Activated naive CD4-positive, alpha-beta T cell treated with anti-CD3 and anti-CD28 coated beads for 36 hours (primary cell): ENCODE measurements at regions of chr16 and their contacts with region 1.

Region 1: DNA sequence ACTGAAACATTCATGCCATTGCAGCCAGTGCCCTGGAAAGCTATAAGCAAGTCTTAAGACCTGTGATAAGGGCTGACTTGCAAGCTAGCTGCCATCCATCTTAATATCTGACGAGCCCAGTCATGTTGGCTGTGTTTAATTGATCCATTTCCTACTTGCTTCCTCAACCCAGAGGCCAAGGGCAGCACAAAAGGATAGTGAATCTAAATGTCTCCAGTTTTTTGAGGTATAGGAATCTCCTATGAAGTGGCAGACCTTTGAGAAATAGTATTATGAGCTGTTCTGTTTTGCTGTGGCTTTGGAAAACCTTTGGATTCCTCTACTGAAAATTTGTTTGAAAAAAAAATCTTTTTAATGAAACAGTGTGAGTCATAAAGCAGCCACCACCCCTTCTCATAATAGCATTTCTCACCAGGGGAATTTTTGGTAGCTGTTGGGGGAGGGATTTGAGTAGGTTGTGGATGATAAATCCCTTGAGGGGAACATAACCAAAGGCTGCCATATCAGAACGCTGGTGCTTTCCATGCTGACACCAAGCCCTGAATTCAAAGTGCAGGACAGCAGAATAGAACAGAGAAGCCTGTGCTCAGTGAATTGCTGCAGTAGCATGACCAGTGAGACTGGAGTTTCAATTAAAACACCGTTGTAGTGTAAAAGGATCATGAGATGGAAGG is 12.9 kb downstream of the ZNRF1 start:
- DNase-seq: peak; percentile 86
- H3K4me3 Mint-ChIP-seq: peak overlapping the region; percentile 62
- H3K27ac Mint-ChIP-seq: peak overlapping the region; percentile 95
- H3K4me1 Mint-ChIP-seq: peaks cover 48% of the 10 kb centered on the region
- H3K27me3 Mint-ChIP-seq: no peaks in the 10 kb centered on the region

Region 2: GRCh38 chr16:74700438-74701225 is 311.1 kb before region 1 on chr16 and contains the start of gene MLKL:
- CTCF ChIA-PET with region 1: no interaction called
- intact Hi-C with region 1: loop called (anchors 2 kb)
- DNase-seq: peak; percentile 71
- H3K4me3 Mint-ChIP-seq: peak within 1 kb of the TSS; percentile 93
- H3K27ac Mint-ChIP-seq: peak within 1 kb of the TSS; percentile 96
- H3K4me1 Mint-ChIP-seq: peaks cover 61% of the 10 kb centered on the region
- H3K27me3 Mint-ChIP-seq: no peaks in the 10 kb centered on the region
- total RNA-seq, gene MLKL: 10.7 to 12.0 TPM

Region 3: GRCh38 chr16:74998481-74999218 is 13.1 kb before region 1 on chr16 and contains the start of gene ZNRF1:
- CTCF ChIA-PET with region 1: interaction called, 9 read pairs
- intact Hi-C with region 1: loop called (anchors 1 kb)
- DNase-seq: peak; percentile 92
- H3K4me3 Mint-ChIP-seq: peak within 1 kb of the TSS; percentile 79
- H3K27ac Mint-ChIP-seq: peak within 1 kb of the TSS; percentile 83
- H3K4me1 Mint-ChIP-seq: peaks cover 25% of the 10 kb centered on the region
- H3K27me3 Mint-ChIP-seq: peaks cover 12% of the 10 kb centered on the region
- total RNA-seq, gene ZNRF1: 35.3 to 35.7 TPM

Region 4: DNA sequence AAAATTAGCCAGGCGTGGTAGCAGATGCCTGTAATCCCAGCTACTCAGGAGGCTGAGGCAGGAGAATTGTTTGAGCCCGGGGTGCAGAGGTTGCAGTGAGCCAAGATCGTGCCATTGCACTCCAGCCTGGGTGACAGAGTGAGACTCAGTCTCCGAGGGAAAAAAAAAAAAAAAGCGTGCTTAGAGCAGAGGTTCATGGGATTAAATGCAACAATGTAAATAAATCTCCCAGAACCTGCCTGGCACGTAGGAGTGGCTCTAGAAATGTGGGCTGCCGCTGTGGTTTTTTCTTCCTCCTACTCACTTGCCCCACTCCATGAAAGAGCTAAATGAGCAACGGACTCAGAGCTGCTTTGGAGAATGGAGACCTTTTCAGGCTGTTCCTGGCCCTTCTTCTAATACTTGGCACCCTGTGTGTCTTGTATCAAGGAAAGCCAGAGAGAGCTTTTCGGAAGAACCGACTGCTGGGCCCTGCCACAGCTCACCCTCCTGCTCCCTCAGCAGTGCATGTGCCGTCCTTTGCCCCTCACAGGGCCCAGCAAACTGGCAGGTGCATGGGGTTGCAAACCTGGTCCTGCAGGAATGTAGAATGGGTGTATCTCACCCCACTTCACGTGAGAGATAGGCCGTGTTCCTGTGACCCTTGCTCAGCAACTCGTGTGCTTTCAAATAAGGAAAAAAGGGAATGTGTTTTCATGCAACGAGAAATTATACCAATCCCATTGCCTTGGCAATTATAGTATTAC is 52.8 kb after region 1 on chr16:
- CTCF ChIA-PET with region 1: no interaction called
- intact Hi-C with region 1: loop called (anchors 2 kb)
- DNase-seq: peak; percentile 65
- H3K4me3 Mint-ChIP-seq: peak overlapping the region; percentile 54
- H3K27ac Mint-ChIP-seq: no peak overlapping the region
- H3K4me1 Mint-ChIP-seq: peaks cover 25% of the 10 kb centered on the region
- H3K27me3 Mint-ChIP-seq: no peaks in the 10 kb centered on the region

Region 5: GRCh38 chr16:75099756-75100602 is 88.2 kb after region 1 on chr16:
- CTCF ChIA-PET with region 1: no interaction called
- intact Hi-C with region 1: loop called (anchors 1 kb)
- DNase-seq: peak; percentile 74
- H3K4me3 Mint-ChIP-seq: no peak overlapping the region
- H3K27ac Mint-ChIP-seq: peak overlapping the region; percentile 68
- H3K4me1 Mint-ChIP-seq: peaks cover 39% of the 10 kb centered on the region
- H3K27me3 Mint-ChIP-seq: no peaks in the 10 kb centered on the region

Region 6: DNA sequence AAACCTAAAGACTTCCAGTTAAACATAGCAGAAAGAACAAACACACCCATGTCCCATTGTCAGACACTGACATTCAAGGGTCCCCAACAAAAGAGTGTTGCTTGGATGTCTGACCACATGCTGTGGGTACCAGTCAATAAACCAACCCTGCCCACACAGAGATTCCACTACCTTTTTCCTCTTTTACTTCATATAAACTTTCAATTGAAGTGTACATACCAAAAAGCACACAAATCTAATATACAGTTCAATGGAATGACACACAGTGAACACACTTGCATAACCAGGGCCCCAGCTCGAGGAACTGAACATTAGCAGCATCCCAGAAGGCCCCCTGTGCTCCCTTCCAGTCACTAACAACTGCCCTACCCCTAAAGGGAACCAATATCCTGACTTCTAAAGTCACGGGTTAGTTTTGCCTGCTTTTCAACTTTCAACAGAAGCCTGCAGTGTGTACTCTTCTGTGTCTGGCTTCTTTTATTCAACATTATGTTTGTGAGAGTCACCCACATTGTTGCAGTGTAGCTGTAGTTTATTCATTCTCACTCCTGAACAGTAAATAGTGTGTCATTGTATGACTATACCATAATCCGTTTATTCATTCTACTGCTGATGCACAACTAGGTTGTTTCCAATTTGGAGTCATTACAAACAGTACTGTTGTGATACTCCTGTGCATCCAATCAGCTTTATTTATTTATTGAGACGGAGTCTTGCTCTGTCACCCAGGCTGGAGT is 403.6 kb after region 1 on chr16:
- CTCF ChIA-PET with region 1: no interaction called
- intact Hi-C with region 1: no loop called
- DNase-seq: no peak
- H3K4me3 Mint-ChIP-seq: no peak overlapping the region
- H3K27ac Mint-ChIP-seq: no peak overlapping the region
- H3K4me1 Mint-ChIP-seq: peaks cover 35% of the 10 kb centered on the region
- H3K27me3 Mint-ChIP-seq: no peaks in the 10 kb centered on the region

Region 7: GRCh38 chr16:75432828-75433731 is 421.3 kb after region 1 on chr16 and contains the start of gene CFDP1:
- CTCF ChIA-PET with region 1: no interaction called
- intact Hi-C with region 1: loop called (anchors 1 kb)
- DNase-seq: peak; percentile 96
- H3K4me3 Mint-ChIP-seq: peak within 1 kb of the TSS; percentile 81
- H3K27ac Mint-ChIP-seq: peak within 1 kb of the TSS; percentile 93
- H3K4me1 Mint-ChIP-seq: peaks cover 30% of the 10 kb centered on the region
- H3K27me3 Mint-ChIP-seq: no peaks in the 10 kb centered on the region
- total RNA-seq, gene CFDP1: 37.2 to 44.1 TPM

Region 8: DNA sequence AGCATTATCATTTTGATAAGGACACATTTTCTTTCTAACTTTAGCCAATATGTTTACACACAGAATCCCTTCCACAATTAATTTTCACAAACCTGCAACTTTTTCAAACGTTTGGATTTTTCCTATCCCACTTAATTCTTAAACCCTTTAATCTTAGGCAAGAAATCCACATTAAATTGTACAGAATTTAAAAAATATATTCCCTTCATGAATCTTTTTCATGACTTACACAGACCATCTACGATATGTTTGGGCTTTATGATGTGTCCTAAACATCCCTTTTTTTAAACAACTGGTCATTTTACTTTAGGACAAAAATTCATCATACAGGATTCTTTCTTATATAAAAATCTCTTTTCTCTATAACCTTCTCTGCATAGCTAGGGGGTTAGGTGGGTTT is 1023.9 kb after region 1 on chr16:
- CTCF ChIA-PET with region 1: no interaction called
- intact Hi-C with region 1: no loop called
- DNase-seq: no peak
- H3K4me3 Mint-ChIP-seq: no peak overlapping the region
- H3K27ac Mint-ChIP-seq: no peak overlapping the region
- H3K4me1 Mint-ChIP-seq: no peaks in the 10 kb centered on the region
- H3K27me3 Mint-ChIP-seq: no peaks in the 10 kb centered on the region